Breast epithelium (tissue), 4 donors: ENCODE measurements at regions of chr5 and their contacts with region 1.

Region 1: GRCh38 chr5:139828207-139828895 is 32.7 kb downstream of the PSD2 start:
- DNase-seq: no peak
- H3K4me3 ChIP-seq: no peak overlapping the region
- H3K27ac ChIP-seq: peak overlapping the region; percentile 38 to 40
- H3K4me1 ChIP-seq: no peaks in the 10 kb centered on the region
- H3K27me3 ChIP-seq: no peaks in the 10 kb centered on the region
- CTCF ChIP-seq: no peak
- POLR2A ChIP-seq: no peak

Region 2: GRCh38 chr5:139763930-139764791 is 64.2 kb before region 1 on chr5:
- intact Hi-C with region 1: no loop called
- DNase-seq: no peak
- H3K4me3 ChIP-seq: no peak overlapping the region
- H3K27ac ChIP-seq: no peak overlapping the region
- H3K4me1 ChIP-seq: no peaks in the 10 kb centered on the region
- H3K27me3 ChIP-seq: peaks cover 0 to 19% of the 10 kb centered on the region in 2 donors
- CTCF ChIP-seq: no peak
- POLR2A ChIP-seq: no peak

Region 3: GRCh38 chr5:140588311-140589070 is 760.1 kb after region 1 on chr5:
- intact Hi-C with region 1: loop called (anchors 10 kb)
- DNase-seq: no peak
- H3K4me3 ChIP-seq: no peak overlapping the region
- H3K27ac ChIP-seq: peak overlapping the region in 1 of 2 donors; percentile 43
- H3K4me1 ChIP-seq: peaks cover 0 to 15% of the 10 kb centered on the region in 2 donors
- H3K27me3 ChIP-seq: no peaks in the 10 kb centered on the region
- CTCF ChIP-seq: no peak
- POLR2A ChIP-seq: no peak